ENCODE measurements at regions of chr1 and their contacts with region 1.

Region 1: GRCh38 chr1:231340328-231341013 is 2.4 kb downstream of the SPRTN start:
- DNase-seq: no peak
- H3K4me3 ChIP-seq: no peak overlapping the region
- H3K27ac ChIP-seq: no peak overlapping the region
- H3K4me1 ChIP-seq: peaks cover 21% of the 10 kb centered on the region
- H3K27me3 ChIP-seq: no peaks in the 10 kb centered on the region
- CTCF ChIP-seq: no peak
- POLR2A ChIP-seq: no peak

Region 2: GRCh38 chr1:231177936-231178335 is 162.5 kb before region 1 on chr1:
- intact Hi-C with region 1: no loop called
- DNase-seq: no peak
- H3K4me3 ChIP-seq: no peak overlapping the region
- H3K27ac ChIP-seq: no peak overlapping the region
- H3K4me1 ChIP-seq: no peaks in the 10 kb centered on the region
- H3K27me3 ChIP-seq: no peaks in the 10 kb centered on the region
- CTCF ChIP-seq: no peak
- POLR2A ChIP-seq: no peak

Region 3: GRCh38 chr1:231590453-231591198 is 250.2 kb after region 1 on chr1:
- intact Hi-C with region 1: loop called (anchors 10 kb)
- DNase-seq: peak; percentile 58
- H3K4me3 ChIP-seq: no peak overlapping the region
- H3K27ac ChIP-seq: no peak overlapping the region
- H3K4me1 ChIP-seq: no peaks in the 10 kb centered on the region
- H3K27me3 ChIP-seq: no peaks in the 10 kb centered on the region
- CTCF ChIP-seq: peak; percentile 36 to 64 (median 52)
- POLR2A ChIP-seq: no peak

Measured in testis (tissue), 5 donors.